ENCODE measurements at regions of chr14 and their contacts with region 1.

Region 1: GRCh38 chr14:92513204-92513973 is at the start of gene RIN3:
- DNase-seq: peak; percentile 73
- ATAC-seq: peak; percentile 48
- H3K4me3 Mint-ChIP-seq: peak within 1 kb of the TSS; percentile 74
- H3K27ac Mint-ChIP-seq: peak within 1 kb of the TSS; percentile 88
- H3K4me1 Mint-ChIP-seq: peaks cover 38% of the 10 kb centered on the region
- H3K27me3 Mint-ChIP-seq: no peaks in the 10 kb centered on the region
- total RNA-seq, gene RIN3: 80.5 to 80.9 TPM

Region 2: GRCh38 chr14:92492258-92492657 is 21.1 kb before region 1 on chr14:
- POLR2A ChIA-PET with region 1: no interaction called
- DNase-seq: no peak
- ATAC-seq: no peak
- H3K4me3 Mint-ChIP-seq: no peak overlapping the region
- H3K27ac Mint-ChIP-seq: no peak overlapping the region
- H3K4me1 Mint-ChIP-seq: peaks cover 2% of the 10 kb centered on the region
- H3K27me3 Mint-ChIP-seq: peaks cover 7% of the 10 kb centered on the region

Region 3: GRCh38 chr14:92531106-92531873 is 17.9 kb after region 1 on chr14:
- POLR2A ChIA-PET with region 1: interaction called, 38 read pairs
- DNase-seq: peak; percentile 76
- ATAC-seq: peak; percentile 89
- H3K4me3 Mint-ChIP-seq: peak overlapping the region; percentile 82
- H3K27ac Mint-ChIP-seq: peak overlapping the region; percentile 99
- H3K4me1 Mint-ChIP-seq: peaks cover 70% of the 10 kb centered on the region
- H3K27me3 Mint-ChIP-seq: no peaks in the 10 kb centered on the region

Region 4: DNA sequence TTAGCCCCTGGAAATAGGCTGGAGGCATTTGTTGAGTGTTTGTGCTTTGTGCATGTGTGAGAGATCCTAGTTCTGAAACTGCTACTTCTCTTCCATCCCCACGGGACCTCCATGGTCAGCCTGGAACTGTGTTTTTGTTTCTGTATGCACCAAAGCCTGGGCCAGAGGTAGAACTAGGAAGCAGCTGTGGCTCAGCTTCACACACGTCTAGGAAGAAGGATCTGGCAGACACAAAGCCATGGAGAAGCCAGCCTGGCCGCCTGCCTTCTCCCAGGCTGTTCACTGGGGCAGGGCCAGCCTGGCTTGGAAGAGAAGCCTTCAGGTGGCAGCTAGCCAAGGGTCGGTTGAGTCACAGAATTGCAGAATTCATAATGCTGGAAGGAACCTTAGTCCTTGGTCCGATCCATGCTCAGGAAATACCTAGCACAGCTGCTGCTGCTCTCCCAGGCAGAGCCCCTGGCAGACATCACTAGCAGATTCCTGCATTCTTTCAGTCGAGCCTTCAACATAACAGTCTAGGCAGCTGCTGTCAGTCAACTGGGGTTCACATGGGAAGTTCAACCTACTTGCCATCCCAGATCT is 27.2 kb after region 1 on chr14:
- POLR2A ChIA-PET with region 1: interaction called, 37 read pairs
- DNase-seq: no peak
- ATAC-seq: no peak
- H3K4me3 Mint-ChIP-seq: peak overlapping the region; percentile 48
- H3K27ac Mint-ChIP-seq: peak overlapping the region; percentile 86
- H3K4me1 Mint-ChIP-seq: peaks cover 67% of the 10 kb centered on the region
- H3K27me3 Mint-ChIP-seq: no peaks in the 10 kb centered on the region

Region 5: DNA sequence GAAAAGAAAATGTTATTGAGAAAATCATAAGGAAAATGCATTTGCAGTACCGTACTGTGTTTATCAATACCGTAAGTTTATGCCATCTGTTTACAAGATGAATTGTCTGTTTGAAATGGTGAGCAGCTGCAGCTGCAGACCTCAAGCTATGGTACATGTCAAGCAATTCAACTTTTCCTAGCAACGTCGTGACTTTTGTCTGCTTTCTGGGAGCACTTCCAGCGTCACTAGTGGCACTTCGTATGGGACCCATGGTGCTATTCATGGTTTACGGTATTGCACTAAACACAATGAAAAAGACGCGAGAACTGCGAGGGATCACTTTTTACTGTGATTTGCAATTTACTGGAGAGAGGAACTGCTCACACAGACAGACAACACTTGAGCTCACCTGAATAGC is 1078.1 kb after region 1 on chr14:
- POLR2A ChIA-PET with region 1: no interaction called
- DNase-seq: no peak
- ATAC-seq: no peak
- H3K4me3 Mint-ChIP-seq: no peak overlapping the region
- H3K27ac Mint-ChIP-seq: no peak overlapping the region
- H3K4me1 Mint-ChIP-seq: no peaks in the 10 kb centered on the region
- H3K27me3 Mint-ChIP-seq: peaks cover 7% of the 10 kb centered on the region